ENCODE measurements at regions of chr16 and their contacts with region 1.

Region 1: GRCh38 chr16:84045818-84046470 is 3.3 kb upstream of the SLC38A8 start:
- DNase-seq: no peak
- ATAC-seq: no peak
- H3K4me3 Mint-ChIP-seq: no peak overlapping the region
- H3K27ac Mint-ChIP-seq: no peak overlapping the region
- H3K4me1 Mint-ChIP-seq: no peaks in the 10 kb centered on the region
- H3K27me3 Mint-ChIP-seq: peaks cover 18% of the 10 kb centered on the region
- CTCF ChIP-seq: no peak

Region 2: DNA sequence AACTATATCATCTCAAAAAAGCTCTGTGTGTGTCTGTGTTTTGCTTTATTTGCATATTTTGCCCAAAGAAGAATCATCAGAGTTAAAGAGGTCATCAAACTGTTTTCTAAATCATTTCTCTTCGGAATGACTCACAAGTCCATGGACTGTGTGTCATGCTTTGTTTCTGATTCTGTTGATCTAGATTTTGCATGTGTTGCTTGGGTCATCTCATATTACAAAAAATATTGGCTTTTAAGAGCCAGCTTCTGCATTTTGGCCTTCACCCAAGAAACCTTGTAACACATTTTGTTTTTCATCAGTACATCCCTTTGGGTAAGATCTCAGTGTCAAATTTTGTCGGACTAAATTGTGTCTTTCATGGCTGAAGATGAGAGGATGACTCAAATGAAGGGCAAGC is 709.3 kb before region 1 on chr16:
- CTCF ChIA-PET with region 1: no interaction called
- POLR2A ChIA-PET with region 1: no interaction called
- intact Hi-C with region 1: no loop called
- DNase-seq: no peak
- ATAC-seq: no peak
- H3K4me3 Mint-ChIP-seq: no peak overlapping the region
- H3K27ac Mint-ChIP-seq: no peak overlapping the region
- H3K4me1 Mint-ChIP-seq: no peaks in the 10 kb centered on the region
- H3K27me3 Mint-ChIP-seq: no peaks in the 10 kb centered on the region
- CTCF ChIP-seq: no peak

Region 3: GRCh38 chr16:84013787-84014569 is 32.0 kb before region 1 on chr16:
- CTCF ChIA-PET with region 1: no interaction called
- POLR2A ChIA-PET with region 1: no interaction called
- intact Hi-C with region 1: no loop called
- DNase-seq: no peak
- ATAC-seq: peak; percentile 75
- H3K4me3 Mint-ChIP-seq: no peak overlapping the region
- H3K27ac Mint-ChIP-seq: no peak overlapping the region
- H3K4me1 Mint-ChIP-seq: peaks cover 8% of the 10 kb centered on the region
- H3K27me3 Mint-ChIP-seq: no peaks in the 10 kb centered on the region
- CTCF ChIP-seq: no peak

Region 4: DNA sequence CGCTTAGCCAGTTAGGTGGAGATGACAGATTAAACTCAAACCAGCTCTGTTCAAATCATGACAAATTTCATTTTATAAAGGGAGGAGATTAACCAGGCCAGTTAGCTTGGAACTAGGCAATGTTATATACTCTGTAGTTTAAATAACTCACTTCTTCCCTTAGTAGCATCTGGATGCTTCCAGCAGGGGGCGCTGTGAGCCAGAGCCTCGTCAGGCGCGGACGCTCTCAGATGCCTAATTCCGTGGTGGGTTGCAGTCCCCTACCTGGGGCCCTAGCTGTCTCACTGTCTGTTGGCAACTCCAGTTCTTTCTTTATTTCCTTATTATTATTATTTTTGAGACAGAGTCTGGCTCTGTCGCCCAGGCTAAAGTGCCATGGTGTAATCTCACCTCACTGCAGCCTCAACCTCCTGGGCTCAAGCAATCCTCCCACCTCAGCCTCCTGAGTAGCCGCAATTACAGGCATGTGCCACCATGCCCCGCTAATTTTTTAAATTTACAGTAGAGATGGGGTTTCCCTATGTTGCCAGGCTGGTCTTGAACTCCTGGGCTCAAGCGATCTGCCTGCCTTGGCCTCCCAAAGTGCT is 231.4 kb after region 1 on chr16:
- CTCF ChIA-PET with region 1: no interaction called
- POLR2A ChIA-PET with region 1: interaction called, 11 read pairs
- intact Hi-C with region 1: no loop called
- DNase-seq: peak; percentile 38
- ATAC-seq: no peak
- H3K4me3 Mint-ChIP-seq: no peak overlapping the region
- H3K27ac Mint-ChIP-seq: no peak overlapping the region
- H3K4me1 Mint-ChIP-seq: no peaks in the 10 kb centered on the region
- H3K27me3 Mint-ChIP-seq: peaks cover 2% of the 10 kb centered on the region
- CTCF ChIP-seq: peak; percentile 61